Calu3 (cell line): ENCODE measurements at regions of chr17 and their contacts with region 1.

Region 1: GRCh38 chr17:65231662-65232335 is 94.6 kb downstream of the RGS9 start:
- DNase-seq: peak; percentile 50
- H3K4me3 Mint-ChIP-seq: no peak overlapping the region
- H3K27ac Mint-ChIP-seq: no peak overlapping the region
- H3K4me1 Mint-ChIP-seq: peaks cover 10% of the 10 kb centered on the region
- H3K27me3 Mint-ChIP-seq: peaks cover 48% of the 10 kb centered on the region
- CTCF ChIP-seq: peak; percentile 26

Region 2: DNA sequence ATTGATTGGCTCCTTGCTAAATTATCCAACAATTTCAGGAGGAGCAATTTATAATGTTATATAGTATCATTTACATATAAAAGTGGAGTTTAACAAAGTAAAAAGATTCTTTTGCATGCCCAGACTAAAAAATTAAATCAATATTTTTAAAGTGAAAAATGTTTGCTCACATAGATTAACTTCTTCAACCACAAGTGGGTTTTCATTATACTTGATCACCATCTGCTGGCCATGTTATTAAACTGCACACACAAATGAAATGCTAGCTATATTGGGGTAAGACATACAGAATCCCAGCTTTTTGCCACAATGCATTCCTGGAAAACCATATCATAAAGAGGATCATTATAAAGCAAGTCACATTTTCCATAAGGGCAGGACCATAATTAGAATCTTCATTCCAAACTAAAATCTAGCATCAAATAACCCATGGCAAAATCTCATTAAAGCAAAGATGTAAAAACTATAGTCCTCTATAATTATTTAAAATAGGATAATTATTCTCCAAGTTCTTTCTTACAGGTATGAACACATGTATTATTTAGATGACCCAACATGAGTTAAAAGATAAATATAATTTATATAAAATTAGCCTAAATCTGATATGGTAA is 933.8 kb after region 1 on chr17:
- CTCF ChIA-PET with region 1: interaction called, 16 read pairs
- intact Hi-C with region 1: loop called (anchors 10 kb)
- DNase-seq: peak; percentile 38
- H3K4me3 Mint-ChIP-seq: no peak overlapping the region
- H3K27ac Mint-ChIP-seq: no peak overlapping the region
- H3K4me1 Mint-ChIP-seq: no peaks in the 10 kb centered on the region
- H3K27me3 Mint-ChIP-seq: no peaks in the 10 kb centered on the region
- CTCF ChIP-seq: peak; percentile 14